ENCODE measurements at regions of chr12 and their contacts with region 1.

Region 1: GRCh38 chr12:42023733-42024494 is 120.8 kb downstream of the GXYLT1 start:
- DNase-seq: peak; percentile 64
- CTCF ChIP-seq: peak; percentile 96

Region 2: DNA sequence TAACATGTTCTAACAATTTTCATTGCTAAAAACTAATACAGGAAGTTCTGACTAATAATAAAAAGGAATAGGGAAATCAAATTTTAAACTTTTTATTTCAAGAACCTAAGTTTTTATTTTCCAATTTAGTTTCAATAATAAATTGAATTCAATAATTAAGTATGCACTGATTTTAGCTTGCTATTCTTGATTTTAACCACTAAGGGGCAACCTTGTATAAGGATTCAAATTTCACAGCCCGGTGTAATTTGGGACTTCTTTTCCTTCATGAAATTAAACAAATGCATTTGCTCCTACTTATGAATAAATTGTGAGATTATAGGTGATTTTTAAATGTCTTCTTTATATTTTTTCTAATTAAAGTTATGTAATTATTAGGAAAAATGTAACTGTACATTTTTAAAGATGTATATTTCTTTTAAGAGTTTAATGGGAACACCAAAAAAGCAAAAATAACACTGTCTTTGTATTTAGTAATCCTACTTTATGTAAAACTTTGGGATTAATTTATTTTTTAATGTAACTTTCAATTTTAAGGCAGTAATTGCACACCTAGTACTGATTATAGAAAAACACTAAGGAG is 1077.2 kb before region 1 on chr12:
- CTCF ChIA-PET with region 1: interaction called, 22 read pairs
- POLR2A ChIA-PET with region 1: no interaction called
- DNase-seq: peak; percentile 8
- CTCF ChIP-seq: peak; percentile 39

Region 3: DNA sequence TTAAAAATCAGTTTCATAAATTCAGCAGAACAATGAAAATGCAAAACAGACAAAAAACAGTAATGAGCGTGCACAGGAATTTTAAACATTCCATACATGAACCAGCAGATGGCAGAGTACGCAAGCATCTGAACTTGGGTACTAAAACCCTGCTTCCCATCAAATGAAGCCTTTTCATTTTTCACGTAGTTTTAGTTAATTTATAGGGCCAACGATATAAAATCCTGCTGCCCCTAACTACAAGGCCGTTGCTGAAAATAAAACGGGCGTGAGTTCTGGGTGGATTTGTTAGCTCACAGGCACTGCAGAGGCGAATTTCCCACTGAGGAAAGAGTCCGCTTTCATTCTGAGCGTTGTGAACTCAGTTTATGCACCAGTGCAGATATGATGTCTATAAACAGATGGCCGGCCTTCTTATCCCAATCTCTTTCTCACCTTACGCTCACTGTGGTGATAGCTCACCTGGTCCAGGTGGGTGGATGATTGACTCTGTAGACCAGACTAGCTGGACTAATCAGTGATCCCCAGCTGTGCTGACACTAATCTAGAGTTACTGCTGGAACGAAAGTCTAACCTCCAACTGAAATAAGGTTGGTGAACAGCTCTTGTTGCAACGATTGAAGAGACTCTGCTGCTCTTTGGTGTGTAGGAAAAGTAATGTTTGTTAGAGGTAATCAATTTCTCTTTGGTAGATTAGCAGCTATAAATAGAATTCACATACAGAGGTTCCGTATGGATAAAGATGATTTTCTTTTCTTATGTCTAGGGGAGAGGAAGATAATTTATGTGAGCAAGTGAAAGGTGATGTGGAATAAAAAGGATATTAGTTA is 746.6 kb before region 1 on chr12:
- CTCF ChIA-PET with region 1: interaction called, 71 read pairs
- POLR2A ChIA-PET with region 1: no interaction called
- DNase-seq: peak; percentile 18
- CTCF ChIP-seq: peak; percentile 52

Region 4: DNA sequence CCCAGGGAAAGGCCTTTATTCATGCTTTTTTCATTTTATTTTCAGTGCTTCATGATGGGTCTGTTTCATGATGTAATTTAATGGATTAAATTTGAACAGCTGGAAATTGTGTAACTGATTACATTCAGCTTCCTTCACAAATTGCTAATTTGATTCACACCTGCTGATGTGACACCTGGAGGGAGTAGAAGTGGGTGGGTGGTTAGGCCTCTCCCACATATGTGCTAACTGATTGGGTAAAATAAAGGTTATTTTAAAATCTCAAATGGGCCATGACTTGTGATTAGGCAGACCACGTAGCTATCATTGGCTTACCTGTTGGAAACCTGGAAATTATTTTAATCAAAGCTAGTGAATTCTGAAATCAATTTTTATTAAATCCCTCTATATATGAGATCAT is 21.4 kb before region 1 on chr12:
- CTCF ChIA-PET with region 1: interaction called, 12 read pairs
- POLR2A ChIA-PET with region 1: no interaction called
- DNase-seq: no peak
- CTCF ChIP-seq: no peak

Region 5: DNA sequence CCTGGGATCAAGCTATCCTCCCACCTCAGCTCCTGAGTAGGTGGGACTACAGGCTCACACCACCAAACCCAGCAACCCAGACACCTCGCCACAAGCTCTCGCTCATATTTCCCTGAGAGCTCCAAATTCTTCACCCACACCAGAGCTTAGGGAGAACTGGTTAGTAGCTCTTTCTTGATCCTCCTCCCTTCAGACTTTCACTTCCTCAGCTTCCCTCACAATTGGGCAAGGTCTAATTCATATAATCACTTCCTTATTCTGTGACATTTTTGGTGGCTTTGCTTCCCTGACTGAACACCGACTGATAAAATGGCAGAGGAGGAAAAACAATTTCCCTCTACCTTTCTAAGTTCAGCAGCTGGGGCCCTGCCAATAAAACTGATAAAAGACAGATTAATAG is 32.2 kb after region 1 on chr12:
- CTCF ChIA-PET with region 1: interaction called, 28 read pairs
- POLR2A ChIA-PET with region 1: no interaction called
- DNase-seq: peak; percentile 39
- CTCF ChIP-seq: no peak

Measured in GM10248 (cell line).